ENCODE measurements at regions of chr9 and their contacts with region 1.

Region 1: DNA sequence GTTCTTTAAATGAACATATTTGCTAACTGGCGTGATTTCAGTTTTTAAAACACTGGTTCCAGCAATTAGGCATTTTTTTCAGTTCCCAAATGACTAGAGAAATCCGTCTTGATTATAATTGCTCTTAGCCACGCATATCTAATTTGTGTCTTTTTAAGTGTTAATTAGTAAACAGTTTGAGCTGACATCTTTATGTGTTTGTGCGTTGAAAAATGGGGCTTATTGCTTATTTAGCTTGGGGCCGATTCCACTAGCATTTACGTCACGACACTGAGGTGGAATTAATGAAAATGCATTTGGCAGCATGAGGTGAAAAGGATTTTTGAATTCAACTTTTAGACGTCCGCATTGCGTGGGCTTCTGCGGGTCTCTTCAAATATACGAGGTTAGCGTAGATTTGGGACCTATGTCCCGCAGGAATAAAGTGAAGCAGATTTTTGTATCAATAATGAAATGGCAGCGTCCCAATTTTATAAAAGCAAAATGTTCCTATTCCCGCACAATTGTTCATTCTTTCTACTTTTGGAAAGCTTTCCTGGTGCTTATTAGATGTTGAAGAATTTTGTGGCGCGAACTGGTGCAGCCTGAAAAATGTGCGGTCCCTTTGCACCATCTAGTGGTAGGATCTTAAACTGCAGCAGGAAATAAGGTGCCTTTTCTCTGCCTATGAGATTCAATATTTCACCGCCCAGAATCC is 122.7 kb upstream of the LMX1B start:
- DNase-seq: peak in 11 of 14 experiments; percentile 31 to 86 (median 45)
- ATAC-seq: peak; percentile 69
- H3K4me3 ChIP-seq: no peak overlapping the region
- H3K4me3 Mint-ChIP-seq: peak overlapping the region; percentile 11
- H3K27ac ChIP-seq: no peak overlapping the region
- H3K27ac Mint-ChIP-seq: no peak overlapping the region
- H3K4me1 ChIP-seq: peaks cover 12% of the 10 kb centered on the region
- H3K4me1 Mint-ChIP-seq: peaks cover 15% of the 10 kb centered on the region
- H3K27me3 ChIP-seq: no peaks in the 10 kb centered on the region
- H3K27me3 Mint-ChIP-seq: no peaks in the 10 kb centered on the region
- CTCF ChIP-seq: peak; percentile 98

Region 2: GRCh38 chr9:125407974-125408900 is 1082.8 kb before region 1 on chr9:
- CTCF ChIA-PET with region 1: interaction called, 10 read pairs
- POLR2A ChIA-PET with region 1: no interaction called
- intact Hi-C with region 1: loop called (anchors 2 to 5 kb)
- DNase-seq: peak; percentile 50 to 85 (median 72)
- ATAC-seq: peak; percentile 85
- H3K4me3 ChIP-seq: peak overlapping the region; percentile 31
- H3K4me3 Mint-ChIP-seq: peak overlapping the region; percentile 80
- H3K27ac ChIP-seq: no peak overlapping the region
- H3K27ac Mint-ChIP-seq: no peak overlapping the region
- H3K4me1 ChIP-seq: peaks cover 14% of the 10 kb centered on the region
- H3K4me1 Mint-ChIP-seq: peaks cover 8% of the 10 kb centered on the region
- H3K27me3 ChIP-seq: peaks cover 7 to 8% of the 10 kb centered on the region in 2 experiments
- H3K27me3 Mint-ChIP-seq: peaks cover 44% of the 10 kb centered on the region
- CTCF ChIP-seq: peak; percentile 90

Region 3: DNA sequence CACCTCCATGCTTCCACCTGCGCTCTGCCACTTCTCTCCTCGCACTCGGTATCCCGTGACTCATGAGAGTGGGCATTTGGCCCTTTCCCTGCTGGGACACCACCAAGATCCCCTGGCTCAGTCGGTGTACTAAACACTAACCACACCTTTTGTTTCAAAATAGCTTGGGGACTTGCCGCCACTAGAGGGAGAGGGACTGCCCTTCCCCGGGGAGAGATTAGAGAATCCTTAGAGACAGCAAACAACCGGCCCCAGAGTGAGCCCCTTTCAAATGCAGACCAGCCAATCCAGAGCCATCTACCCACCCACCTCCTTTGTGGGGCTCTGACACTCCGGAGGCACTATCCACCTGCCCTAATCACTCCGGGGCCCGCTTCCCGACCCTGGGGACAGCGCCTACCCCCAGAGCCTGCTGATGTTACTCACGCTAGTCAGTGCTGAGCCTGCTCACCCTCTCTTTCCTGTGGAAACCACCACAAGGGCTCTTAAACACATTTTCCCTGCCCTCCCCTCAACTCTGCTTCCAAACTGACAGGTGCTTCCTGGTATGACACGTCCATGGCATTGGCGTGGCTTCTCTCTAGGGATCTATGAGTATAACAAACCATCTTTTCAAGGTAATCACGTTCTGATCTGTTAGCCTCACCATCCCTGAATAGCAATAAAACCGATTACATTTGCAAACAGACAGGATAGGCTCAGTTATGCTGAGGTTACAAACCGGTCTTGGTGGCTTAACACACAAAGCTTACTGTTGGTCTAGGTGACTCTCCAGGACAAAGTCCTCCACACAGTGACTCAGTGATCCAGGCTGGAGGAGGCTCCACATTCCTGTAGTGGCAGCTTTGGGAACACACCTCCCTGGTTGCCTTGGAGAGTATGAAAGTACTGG is 344.5 kb before region 1 on chr9:
- CTCF ChIA-PET with region 1: no interaction called
- POLR2A ChIA-PET with region 1: no interaction called
- intact Hi-C with region 1: loop called in 1 of 2 experiments (anchors 10 kb)
- DNase-seq: peak in 3 of 14 experiments; percentile 3 to 19 (median 4)
- ATAC-seq: no peak
- H3K4me3 ChIP-seq: no peak overlapping the region
- H3K4me3 Mint-ChIP-seq: no peak overlapping the region
- H3K27ac ChIP-seq: no peak overlapping the region
- H3K27ac Mint-ChIP-seq: no peak overlapping the region
- H3K4me1 ChIP-seq: peaks cover 6% of the 10 kb centered on the region
- H3K4me1 Mint-ChIP-seq: peaks cover 4% of the 10 kb centered on the region
- H3K27me3 ChIP-seq: peaks cover 15% of the 10 kb centered on the region in 2 experiments
- H3K27me3 Mint-ChIP-seq: peaks cover 37% of the 10 kb centered on the region
- CTCF ChIP-seq: no peak

Region 4: DNA sequence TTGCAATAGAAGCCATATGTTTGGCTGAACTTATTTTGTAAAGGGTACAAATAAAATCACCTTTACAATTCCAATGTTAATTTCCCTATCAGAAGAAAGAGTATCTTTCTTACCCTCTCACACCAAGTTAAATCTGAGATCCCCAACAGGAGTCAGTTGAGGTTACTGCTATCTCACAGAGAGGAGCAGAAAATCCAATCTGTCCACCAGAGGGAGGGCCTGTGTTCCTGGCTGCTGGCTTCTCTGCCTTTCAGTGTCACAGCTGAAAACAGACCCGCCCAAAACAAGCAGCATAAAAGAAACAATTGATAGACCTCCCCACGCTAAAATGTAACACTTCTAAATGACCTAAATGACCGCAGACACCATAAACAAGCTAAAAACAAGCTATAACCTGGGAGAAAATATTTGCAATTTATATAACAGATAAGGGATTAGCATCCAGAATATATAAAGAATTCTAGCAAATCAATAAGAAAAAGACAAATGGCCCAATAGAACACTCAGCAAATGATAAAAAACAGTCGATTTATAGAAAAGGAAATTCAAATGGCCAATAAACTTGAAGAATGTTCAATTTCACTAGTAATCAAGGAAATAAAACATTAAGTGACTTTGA is 188.9 kb before region 1 on chr9:
- CTCF ChIA-PET with region 1: interaction called, 18 read pairs
- POLR2A ChIA-PET with region 1: no interaction called
- intact Hi-C with region 1: loop called (anchors 1 kb)
- DNase-seq: peak; percentile 30 to 78 (median 42)
- ATAC-seq: peak; percentile 97
- H3K4me3 ChIP-seq: no peak overlapping the region
- H3K4me3 Mint-ChIP-seq: no peak overlapping the region
- H3K27ac ChIP-seq: no peak overlapping the region
- H3K27ac Mint-ChIP-seq: no peak overlapping the region
- H3K4me1 ChIP-seq: no peaks in the 10 kb centered on the region
- H3K4me1 Mint-ChIP-seq: peaks cover 5% of the 10 kb centered on the region
- H3K27me3 ChIP-seq: no peaks in the 10 kb centered on the region
- H3K27me3 Mint-ChIP-seq: no peaks in the 10 kb centered on the region
- CTCF ChIP-seq: peak; percentile 62

Region 5: GRCh38 chr9:126398403-126399058 is 92.5 kb before region 1 on chr9:
- CTCF ChIA-PET with region 1: interaction called, 11 read pairs
- POLR2A ChIA-PET with region 1: interaction called, 3 read pairs
- intact Hi-C with region 1: loop called (anchors 1 to 2 kb)
- DNase-seq: peak; percentile 39 to 85 (median 68)
- ATAC-seq: no peak
- H3K4me3 ChIP-seq: no peak overlapping the region
- H3K4me3 Mint-ChIP-seq: peak overlapping the region; percentile 48
- H3K27ac ChIP-seq: no peak overlapping the region
- H3K27ac Mint-ChIP-seq: peak overlapping the region; percentile 85
- H3K4me1 ChIP-seq: peaks cover 41% of the 10 kb centered on the region
- H3K4me1 Mint-ChIP-seq: peaks cover 58% of the 10 kb centered on the region
- H3K27me3 ChIP-seq: no peaks in the 10 kb centered on the region
- H3K27me3 Mint-ChIP-seq: no peaks in the 10 kb centered on the region
- CTCF ChIP-seq: peak; percentile 96

Region 6: DNA sequence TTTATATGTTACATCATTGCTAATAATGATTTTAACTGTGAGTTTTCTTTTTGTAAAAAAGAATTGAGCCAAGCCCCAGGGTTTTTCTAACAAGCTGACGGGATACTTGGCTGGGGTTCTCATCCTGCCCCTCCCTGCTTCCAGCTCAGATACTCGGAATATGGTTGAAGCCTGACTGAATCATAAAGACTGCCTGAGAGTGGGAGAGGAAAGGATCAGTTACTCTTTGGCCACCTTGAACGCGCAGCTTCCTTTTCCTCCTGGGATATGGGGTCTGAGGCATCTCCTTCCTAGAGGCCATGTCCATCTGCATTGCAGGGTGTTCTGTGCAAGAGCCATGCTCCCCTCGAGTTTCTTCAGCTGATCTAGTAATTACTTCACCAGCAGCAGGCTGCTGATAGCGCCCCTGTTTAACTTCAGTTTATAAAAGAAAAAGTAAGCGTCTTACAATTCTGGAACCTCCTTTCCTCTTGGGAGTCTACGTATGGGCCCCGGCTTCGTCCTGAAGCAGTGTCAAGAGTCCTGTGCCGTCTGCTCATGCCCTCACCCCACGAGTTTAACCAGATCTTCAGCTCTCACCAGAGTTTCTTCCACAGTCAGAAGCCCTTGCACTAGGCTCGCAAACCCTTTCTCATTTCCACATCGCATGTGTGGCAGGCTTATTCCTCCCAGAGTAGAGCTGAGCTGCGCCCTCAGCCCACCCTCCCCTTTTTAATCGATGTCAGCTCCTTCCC is 34.4 kb before region 1 on chr9:
- CTCF ChIA-PET with region 1: no interaction called
- POLR2A ChIA-PET with region 1: no interaction called
- intact Hi-C with region 1: no loop called
- DNase-seq: peak in 1 of 14 experiments; percentile 16
- ATAC-seq: no peak
- H3K4me3 ChIP-seq: no peak overlapping the region
- H3K4me3 Mint-ChIP-seq: no peak overlapping the region
- H3K27ac ChIP-seq: no peak overlapping the region
- H3K27ac Mint-ChIP-seq: no peak overlapping the region
- H3K4me1 ChIP-seq: peaks cover 10% of the 10 kb centered on the region
- H3K4me1 Mint-ChIP-seq: peaks cover 7% of the 10 kb centered on the region
- H3K27me3 ChIP-seq: no peaks in the 10 kb centered on the region
- H3K27me3 Mint-ChIP-seq: no peaks in the 10 kb centered on the region
- CTCF ChIP-seq: no peak

Region 7: GRCh38 chr9:126471084-126471624 is 19.9 kb before region 1 on chr9:
- CTCF ChIA-PET with region 1: interaction called, 24 read pairs
- POLR2A ChIA-PET with region 1: interaction called, 13 read pairs
- intact Hi-C with region 1: loop called (anchors 1 to 2 kb)
- DNase-seq: peak; percentile 53 to 92 (median 62)
- ATAC-seq: peak; percentile 73
- H3K4me3 ChIP-seq: peak overlapping the region; percentile 31
- H3K4me3 Mint-ChIP-seq: peak overlapping the region; percentile 81
- H3K27ac ChIP-seq: peak overlapping the region; percentile 42 to 56
- H3K27ac Mint-ChIP-seq: peak overlapping the region; percentile 95
- H3K4me1 ChIP-seq: peaks cover 82% of the 10 kb centered on the region
- H3K4me1 Mint-ChIP-seq: peaks cover 80% of the 10 kb centered on the region
- H3K27me3 ChIP-seq: no peaks in the 10 kb centered on the region
- H3K27me3 Mint-ChIP-seq: no peaks in the 10 kb centered on the region
- CTCF ChIP-seq: no peak